Caco-2 (cell line): ENCODE measurements at regions of chr2 and their contacts with region 1.

Region 1: GRCh38 chr2:224284134-224284946 is 117.6 kb downstream of the FAM124B start:
- DNase-seq: peak in 1 of 2 experiments; percentile 70
- H3K4me3 ChIP-seq: no peak overlapping the region
- H3K4me3 Mint-ChIP-seq: no peak overlapping the region
- H3K27ac Mint-ChIP-seq: no peak overlapping the region
- H3K4me1 ChIP-seq: no peaks in the 10 kb centered on the region
- H3K4me1 Mint-ChIP-seq: no peaks in the 10 kb centered on the region
- H3K27me3 ChIP-seq: no peaks in the 10 kb centered on the region
- H3K27me3 Mint-ChIP-seq: peaks cover 8% of the 10 kb centered on the region
- CTCF ChIP-seq: peak; percentile 34 to 95

Region 2: DNA sequence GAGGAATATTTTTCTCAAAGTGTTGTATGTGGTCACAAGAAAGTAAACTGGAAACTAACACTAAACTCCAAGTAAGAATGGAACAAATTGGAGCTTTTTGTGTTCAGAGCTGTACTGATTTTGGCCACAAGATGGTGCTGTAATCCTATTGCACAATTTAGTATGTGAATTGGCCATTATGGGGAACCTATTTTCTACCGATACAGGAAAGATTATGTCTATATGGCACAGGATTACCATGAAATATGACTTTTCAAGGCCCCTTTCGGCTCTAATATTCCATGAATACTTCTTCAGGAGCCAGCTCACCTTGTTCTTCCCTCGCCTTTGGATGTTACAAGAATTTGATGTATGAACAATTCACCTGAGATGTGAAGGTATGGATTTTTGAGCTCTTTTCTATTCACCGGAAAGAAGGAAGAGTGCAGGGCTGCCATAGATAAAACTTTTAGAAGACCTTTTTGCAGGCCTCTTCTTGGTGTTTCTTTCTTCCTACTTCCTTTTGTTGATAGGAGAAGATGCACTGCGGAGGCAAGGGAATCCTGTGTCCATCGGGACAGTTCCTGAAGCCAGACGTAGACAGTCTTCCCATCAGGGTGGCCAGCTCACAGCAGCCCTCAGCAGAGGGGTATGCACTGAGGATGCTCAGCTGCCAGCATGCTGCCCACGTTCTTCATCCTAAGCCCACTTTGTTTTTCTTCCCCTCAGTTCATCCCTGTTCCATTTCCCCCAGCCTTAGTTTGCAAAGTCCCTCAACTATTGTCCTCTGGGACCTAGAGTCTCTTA is 313.8 kb before region 1 on chr2:
- CTCF ChIA-PET with region 1: interaction called, 65 read pairs
- POLR2A ChIA-PET with region 1: no interaction called
- intact Hi-C with region 1: loop called (anchors 1 kb)
- DNase-seq: peak in 1 of 2 experiments; percentile 76
- H3K4me3 ChIP-seq: no peak overlapping the region
- H3K4me3 Mint-ChIP-seq: no peak overlapping the region
- H3K27ac Mint-ChIP-seq: no peak overlapping the region
- H3K4me1 ChIP-seq: no peaks in the 10 kb centered on the region
- H3K4me1 Mint-ChIP-seq: no peaks in the 10 kb centered on the region
- H3K27me3 ChIP-seq: no peaks in the 10 kb centered on the region
- H3K27me3 Mint-ChIP-seq: no peaks in the 10 kb centered on the region
- CTCF ChIP-seq: peak; percentile 95 to 98

Region 3: DNA sequence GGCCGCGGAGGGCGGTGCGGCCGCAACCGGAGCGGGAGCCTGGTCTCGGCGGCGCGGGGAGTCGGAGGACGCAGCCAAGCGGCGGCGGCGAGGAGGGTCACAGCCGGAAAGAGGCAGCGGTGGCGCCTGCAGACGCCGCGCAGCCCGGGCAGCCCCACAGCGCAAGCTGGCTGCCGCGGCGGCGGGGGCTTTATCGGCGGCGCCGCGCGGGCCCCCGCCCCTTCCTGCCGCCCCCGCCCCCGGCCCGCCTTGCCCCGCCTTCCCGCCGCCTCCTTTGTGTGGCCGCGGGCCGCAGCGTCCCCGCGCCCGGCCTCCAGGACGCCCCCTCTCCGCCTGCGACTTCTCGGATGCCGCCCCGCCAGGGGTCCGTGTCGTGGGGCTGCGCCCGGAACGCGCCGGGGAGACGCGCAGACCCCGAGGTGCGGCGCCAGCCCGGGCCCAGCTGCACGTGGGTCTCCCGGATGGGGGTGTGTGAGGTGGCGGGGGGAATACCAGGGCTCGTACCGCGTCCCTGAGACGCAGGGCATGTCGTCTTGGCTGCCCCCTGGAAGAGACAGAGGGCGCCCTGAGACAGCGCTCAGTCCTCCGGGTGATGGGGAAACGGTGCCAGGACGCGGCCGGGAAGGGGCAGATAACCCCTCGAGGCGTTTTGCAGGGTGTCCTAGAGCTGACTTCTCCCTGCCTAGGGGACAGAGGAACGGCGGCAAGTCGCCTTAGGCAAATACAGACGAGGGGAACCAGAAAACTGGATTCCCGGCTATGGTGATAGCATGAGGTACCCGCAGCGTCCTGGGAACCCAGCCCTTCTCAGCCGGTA is 245.0 kb before region 1 on chr2 and contains the start of gene SERPINE2:
- CTCF ChIA-PET with region 1: no interaction called
- POLR2A ChIA-PET with region 1: no interaction called
- intact Hi-C with region 1: loop called (anchors 1 kb)
- DNase-seq: peak; percentile 54 to 66
- H3K4me3 ChIP-seq: peak within 1 kb of the TSS; percentile 48
- H3K4me3 Mint-ChIP-seq: peak within 1 kb of the TSS; percentile 66
- H3K27ac Mint-ChIP-seq: no peak within 1 kb of the TSS
- H3K4me1 ChIP-seq: peaks cover 7% of the 10 kb centered on the region
- H3K4me1 Mint-ChIP-seq: peaks cover 7% of the 10 kb centered on the region
- H3K27me3 ChIP-seq: peaks cover 6% of the 10 kb centered on the region
- H3K27me3 Mint-ChIP-seq: peaks cover 47% of the 10 kb centered on the region
- CTCF ChIP-seq: peak in 1 of 2 experiments; percentile 37
- total RNA-seq, gene SERPINE2: 3.8 and 4.7 TPM in 2 replicates

Region 4: GRCh38 chr2:224145751-224146355 is 138.5 kb before region 1 on chr2:
- CTCF ChIA-PET with region 1: interaction called, 3 read pairs
- POLR2A ChIA-PET with region 1: no interaction called
- intact Hi-C with region 1: loop called (anchors 2 kb)
- DNase-seq: peak in 1 of 2 experiments; percentile 57
- H3K4me3 ChIP-seq: no peak overlapping the region
- H3K4me3 Mint-ChIP-seq: peak overlapping the region; percentile 6
- H3K27ac Mint-ChIP-seq: peak overlapping the region; percentile 16
- H3K4me1 ChIP-seq: peaks cover 24% of the 10 kb centered on the region
- H3K4me1 Mint-ChIP-seq: peaks cover 15% of the 10 kb centered on the region
- H3K27me3 ChIP-seq: no peaks in the 10 kb centered on the region
- H3K27me3 Mint-ChIP-seq: no peaks in the 10 kb centered on the region
- CTCF ChIP-seq: no peak

Region 5: DNA sequence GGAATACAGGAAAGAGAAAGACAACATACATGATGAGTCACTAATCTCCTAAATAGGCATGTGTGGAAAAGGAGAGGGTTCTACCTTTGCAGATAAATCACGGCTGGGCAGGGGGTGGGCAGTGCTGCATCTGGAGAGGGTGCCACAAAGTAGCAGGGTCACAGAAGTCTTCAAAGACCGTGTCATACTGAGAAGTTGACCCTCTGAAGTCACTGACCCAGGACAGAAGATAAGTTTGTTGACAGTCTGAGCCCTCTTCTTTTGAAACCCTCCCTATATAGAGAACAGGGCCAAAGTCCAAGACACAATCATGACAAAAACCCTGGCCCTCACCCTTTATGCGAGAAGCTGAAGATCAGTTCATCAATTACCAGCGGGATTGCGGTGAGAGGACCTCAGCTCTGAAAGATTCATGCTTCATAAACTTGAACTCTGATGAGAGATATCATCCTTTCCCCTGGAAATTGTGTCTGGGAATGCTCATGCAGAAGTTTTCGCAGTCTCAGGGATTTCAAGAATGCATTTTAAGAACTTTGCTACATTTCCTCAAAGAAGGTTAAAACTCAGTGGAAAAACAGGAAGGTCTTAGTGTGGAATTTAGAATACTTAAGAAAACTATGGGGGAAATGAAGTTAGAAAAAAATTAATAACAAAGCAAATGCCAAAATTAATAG is 12.0 kb before region 1 on chr2:
- CTCF ChIA-PET with region 1: interaction called, 11 read pairs
- POLR2A ChIA-PET with region 1: no interaction called
- intact Hi-C with region 1: no loop called
- DNase-seq: peak; percentile 76 to 90
- H3K4me3 ChIP-seq: no peak overlapping the region
- H3K4me3 Mint-ChIP-seq: peak overlapping the region; percentile 44
- H3K27ac Mint-ChIP-seq: peak overlapping the region; percentile 58
- H3K4me1 ChIP-seq: peaks cover 32% of the 10 kb centered on the region
- H3K4me1 Mint-ChIP-seq: peaks cover 35% of the 10 kb centered on the region
- H3K27me3 ChIP-seq: no peaks in the 10 kb centered on the region
- H3K27me3 Mint-ChIP-seq: no peaks in the 10 kb centered on the region
- CTCF ChIP-seq: no peak

Region 6: GRCh38 chr2:224302952-224303351 is 18.6 kb after region 1 on chr2:
- CTCF ChIA-PET with region 1: no interaction called
- POLR2A ChIA-PET with region 1: no interaction called
- intact Hi-C with region 1: no loop called
- DNase-seq: no peak
- H3K4me3 ChIP-seq: no peak overlapping the region
- H3K4me3 Mint-ChIP-seq: no peak overlapping the region
- H3K27ac Mint-ChIP-seq: no peak overlapping the region
- H3K4me1 ChIP-seq: no peaks in the 10 kb centered on the region
- H3K4me1 Mint-ChIP-seq: no peaks in the 10 kb centered on the region
- H3K27me3 ChIP-seq: peaks cover 4% of the 10 kb centered on the region; the same call in 1 of the 2 replicates
- H3K27me3 Mint-ChIP-seq: peaks cover 11% of the 10 kb centered on the region
- CTCF ChIP-seq: no peak